ENCODE measurements at regions of chr2 and their contacts with region 1.

Region 1: DNA sequence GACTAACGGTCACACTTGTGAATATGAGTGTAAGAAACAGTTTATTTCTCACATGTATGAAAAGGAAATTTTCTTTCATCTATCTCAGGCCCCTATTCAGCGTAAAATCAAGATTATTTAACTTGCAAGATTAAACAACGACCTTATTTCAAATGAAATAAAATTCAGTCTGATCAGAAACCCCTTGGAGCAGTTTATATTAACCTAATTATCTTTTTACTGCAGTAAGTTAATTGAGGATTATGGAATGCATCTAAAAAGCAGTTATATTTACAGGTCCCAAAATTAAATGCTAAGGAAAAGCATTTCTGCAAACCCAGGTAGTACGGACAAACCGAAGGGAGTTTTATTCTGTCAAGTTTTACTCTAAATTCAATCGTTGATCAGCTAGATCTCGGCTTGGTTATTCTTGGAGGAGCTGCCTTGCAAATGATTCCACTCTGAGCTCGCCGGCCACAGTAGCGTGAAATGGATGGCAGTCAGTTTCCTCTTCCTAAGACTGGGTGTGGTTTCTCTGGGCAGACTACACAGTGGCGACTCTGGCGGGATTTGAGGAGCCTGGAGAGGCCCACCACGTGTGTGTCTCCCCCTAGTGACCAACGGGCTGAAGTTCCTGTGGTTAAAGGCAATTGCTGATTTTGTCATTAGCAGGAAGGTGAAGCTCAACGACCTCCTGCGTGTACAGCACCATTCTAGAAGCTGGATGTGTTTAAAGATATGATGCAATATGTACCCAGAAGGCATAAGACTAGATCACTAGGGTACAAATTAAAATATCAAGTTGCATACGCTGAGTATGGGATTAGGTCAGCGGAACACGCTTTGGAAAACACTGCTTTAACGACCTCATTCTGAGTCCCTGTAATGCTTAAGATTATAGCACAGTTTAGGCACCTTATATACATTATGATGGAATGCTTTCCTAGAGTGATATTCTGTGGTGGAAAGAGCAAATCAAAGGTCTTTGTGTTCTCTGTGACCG is 36.4 kb downstream of the PRKRA start:
- DNase-seq: peak; percentile 90
- ATAC-seq: peak; percentile 85
- H3K4me3 ChIP-seq: peak overlapping the region; percentile 78
- H3K27ac ChIP-seq: peak overlapping the region; percentile 97
- H3K4me1 ChIP-seq: peaks cover 6% of the 10 kb centered on the region
- H3K27me3 ChIP-seq: no peaks in the 10 kb centered on the region
- CTCF ChIP-seq: peak; percentile 95 to 97 (median 97); a peak in 5 of 6 replicates
- EP300 ChIP-seq: 0 out of 4 replicates have a peak, but pooled peaks of 1 of the 2 experiments have one; percentile 11
- POLR2A ChIP-seq: peak; percentile 76
- RAD21 ChIP-seq: peak; percentile 85

Region 2: GRCh38 chr2:178112202-178113152 is 302.1 kb before region 1 on chr2 and contains the start of gene RBM45:
- CTCF ChIA-PET with region 1: interaction called, 101 read pairs
- POLR2A ChIA-PET with region 1: interaction called, 6 read pairs
- RAD21 ChIA-PET with region 1: interaction called, 18 read pairs
- SMC1A ChIA-PET with region 1: interaction called, 29 read pairs
- in situ Hi-C with region 1: loop called (anchors 5 kb)
- intact Hi-C with region 1: loop called (anchors 1 kb)
- DNase-seq: peak; percentile 60
- ATAC-seq: peak; percentile 94
- H3K4me3 ChIP-seq: peak within 1 kb of the TSS; percentile 92
- H3K27ac ChIP-seq: peak within 1 kb of the TSS; percentile 60
- H3K4me1 ChIP-seq: peaks cover 12% of the 10 kb centered on the region
- H3K27me3 ChIP-seq: no peaks in the 10 kb centered on the region
- CTCF ChIP-seq: peak; percentile 98
- EP300 ChIP-seq: peak; percentile 21 to 34; a peak in 1 of 4 replicates
- POLR2A ChIP-seq: peak; percentile 96
- RAD21 ChIP-seq: peak; percentile 68
- polyA plus RNA-seq, gene RBM45: 6.2 to 12.8 TPM

Region 3: GRCh38 chr2:178386986-178387597 is 27.5 kb before region 1 on chr2:
- CTCF ChIA-PET with region 1: interaction called, 702 read pairs
- POLR2A ChIA-PET with region 1: no interaction called
- RAD21 ChIA-PET with region 1: interaction called, 6 read pairs
- SMC1A ChIA-PET with region 1: interaction called, 454 read pairs
- in situ Hi-C with region 1: no loop called
- intact Hi-C with region 1: no loop called
- DNase-seq: no peak
- ATAC-seq: no peak
- H3K4me3 ChIP-seq: no peak overlapping the region
- H3K27ac ChIP-seq: no peak overlapping the region
- H3K4me1 ChIP-seq: no peaks in the 10 kb centered on the region
- H3K27me3 ChIP-seq: no peaks in the 10 kb centered on the region
- CTCF ChIP-seq: no peak
- EP300 ChIP-seq: no peak
- POLR2A ChIP-seq: no peak
- RAD21 ChIP-seq: no peak

Region 4: GRCh38 chr2:178404368-178404767 is 10.2 kb before region 1 on chr2:
- CTCF ChIA-PET with region 1: interaction called, 702 read pairs
- POLR2A ChIA-PET with region 1: interaction called, 64 read pairs
- RAD21 ChIA-PET with region 1: interaction called, 162 read pairs
- SMC1A ChIA-PET with region 1: interaction called, 454 read pairs
- in situ Hi-C with region 1: no loop called
- intact Hi-C with region 1: loop called (anchors 1 kb)
- DNase-seq: peak; percentile 95
- ATAC-seq: peak; percentile 99
- H3K4me3 ChIP-seq: peak overlapping the region; percentile 36; the same call in 1 of the 2 replicates
- H3K27ac ChIP-seq: peak overlapping the region; percentile 64
- H3K4me1 ChIP-seq: peaks cover 24% of the 10 kb centered on the region
- H3K27me3 ChIP-seq: no peaks in the 10 kb centered on the region
- CTCF ChIP-seq: no peak
- EP300 ChIP-seq: peak; percentile 99 to 100
- POLR2A ChIP-seq: peak; percentile 67
- RAD21 ChIP-seq: no peak

Region 5: GRCh38 chr2:178441426-178441825 is 26.9 kb after region 1 on chr2:
- CTCF ChIA-PET with region 1: interaction called, 38 read pairs
- POLR2A ChIA-PET with region 1: interaction called, 3 read pairs
- RAD21 ChIA-PET with region 1: interaction called, 7 read pairs
- SMC1A ChIA-PET with region 1: interaction called, 19 read pairs
- in situ Hi-C with region 1: no loop called
- intact Hi-C with region 1: no loop called
- DNase-seq: no peak
- ATAC-seq: no peak
- H3K4me3 ChIP-seq: no peak overlapping the region
- H3K27ac ChIP-seq: no peak overlapping the region
- H3K4me1 ChIP-seq: no peaks in the 10 kb centered on the region
- H3K27me3 ChIP-seq: no peaks in the 10 kb centered on the region
- CTCF ChIP-seq: no peak
- EP300 ChIP-seq: no peak
- POLR2A ChIP-seq: no peak
- RAD21 ChIP-seq: no peak

Region 6: DNA sequence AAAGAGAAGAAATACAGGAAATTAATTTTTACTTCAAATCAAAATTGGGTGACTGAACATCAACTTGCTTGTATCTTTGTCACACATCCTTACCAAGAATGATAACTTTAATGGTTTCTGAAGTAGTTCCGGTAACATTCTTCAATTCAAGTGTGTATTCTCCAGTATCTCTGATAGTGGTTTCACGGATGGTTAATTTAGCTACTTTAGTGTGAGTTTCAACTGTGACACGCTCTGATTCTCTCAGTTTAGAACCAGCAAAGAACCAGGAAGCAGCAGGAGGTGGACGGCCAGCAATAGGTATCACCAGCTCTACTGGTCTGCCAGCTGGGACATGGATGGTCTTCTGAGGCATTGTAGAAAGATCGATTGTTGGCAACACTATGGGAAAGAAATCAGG is 128.0 kb after region 1 on chr2:
- CTCF ChIA-PET with region 1: no interaction called
- POLR2A ChIA-PET with region 1: no interaction called
- RAD21 ChIA-PET with region 1: no interaction called
- SMC1A ChIA-PET with region 1: no interaction called
- in situ Hi-C with region 1: no loop called
- intact Hi-C with region 1: no loop called
- DNase-seq: no peak
- ATAC-seq: peak; percentile 85
- H3K4me3 ChIP-seq: no peak overlapping the region
- H3K27ac ChIP-seq: no peak overlapping the region
- H3K4me1 ChIP-seq: peaks cover 14% of the 10 kb centered on the region
- H3K27me3 ChIP-seq: no peaks in the 10 kb centered on the region
- CTCF ChIP-seq: no peak
- EP300 ChIP-seq: no peak
- POLR2A ChIP-seq: no peak
- RAD21 ChIP-seq: no peak

Region 7: DNA sequence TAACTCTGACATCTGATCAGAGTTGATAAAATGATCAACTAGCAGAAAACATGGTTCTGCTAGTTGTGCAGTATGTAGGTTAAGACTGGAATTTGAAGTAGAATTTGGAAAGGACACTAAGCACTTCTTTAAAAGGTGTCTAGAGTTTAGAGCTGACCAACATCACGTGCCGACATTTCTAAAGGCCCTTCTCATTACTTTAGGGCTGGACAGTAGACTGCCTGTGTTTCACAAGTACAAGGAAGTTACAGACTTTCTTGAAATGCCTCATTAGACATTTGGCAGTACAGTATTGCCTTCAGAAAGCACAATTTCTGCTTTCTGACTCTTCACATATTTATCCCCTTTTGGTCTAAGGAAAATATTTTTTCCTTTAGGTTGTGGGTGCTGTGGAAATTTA is 1191.6 kb after region 1 on chr2:
- CTCF ChIA-PET with region 1: no interaction called
- POLR2A ChIA-PET with region 1: no interaction called
- RAD21 ChIA-PET with region 1: no interaction called
- SMC1A ChIA-PET with region 1: no interaction called
- in situ Hi-C with region 1: no loop called
- intact Hi-C with region 1: no loop called
- DNase-seq: no peak
- ATAC-seq: no peak
- H3K4me3 ChIP-seq: no peak overlapping the region
- H3K27ac ChIP-seq: no peak overlapping the region
- H3K4me1 ChIP-seq: no peaks in the 10 kb centered on the region
- H3K27me3 ChIP-seq: no peaks in the 10 kb centered on the region
- CTCF ChIP-seq: no peak
- EP300 ChIP-seq: no peak
- POLR2A ChIP-seq: no peak
- RAD21 ChIP-seq: no peak